Endothelial cell of umbilical vein (primary cell): ENCODE measurements at regions of chr9 and their contacts with region 1.

Region 1: GRCh38 chr9:14768405-14769229 is 46.1 kb upstream of the CER1 start:
- DNase-seq: peak; percentile 77
- H3K4me3 ChIP-seq: no peak overlapping the region
- H3K27ac ChIP-seq: no peak overlapping the region
- H3K4me1 ChIP-seq: peaks cover 3% of the 10 kb centered on the region
- H3K27me3 ChIP-seq: no peaks in the 10 kb centered on the region
- CTCF ChIP-seq: peak; percentile 44 to 47
- POLR2A ChIP-seq: no peak

Region 2: DNA sequence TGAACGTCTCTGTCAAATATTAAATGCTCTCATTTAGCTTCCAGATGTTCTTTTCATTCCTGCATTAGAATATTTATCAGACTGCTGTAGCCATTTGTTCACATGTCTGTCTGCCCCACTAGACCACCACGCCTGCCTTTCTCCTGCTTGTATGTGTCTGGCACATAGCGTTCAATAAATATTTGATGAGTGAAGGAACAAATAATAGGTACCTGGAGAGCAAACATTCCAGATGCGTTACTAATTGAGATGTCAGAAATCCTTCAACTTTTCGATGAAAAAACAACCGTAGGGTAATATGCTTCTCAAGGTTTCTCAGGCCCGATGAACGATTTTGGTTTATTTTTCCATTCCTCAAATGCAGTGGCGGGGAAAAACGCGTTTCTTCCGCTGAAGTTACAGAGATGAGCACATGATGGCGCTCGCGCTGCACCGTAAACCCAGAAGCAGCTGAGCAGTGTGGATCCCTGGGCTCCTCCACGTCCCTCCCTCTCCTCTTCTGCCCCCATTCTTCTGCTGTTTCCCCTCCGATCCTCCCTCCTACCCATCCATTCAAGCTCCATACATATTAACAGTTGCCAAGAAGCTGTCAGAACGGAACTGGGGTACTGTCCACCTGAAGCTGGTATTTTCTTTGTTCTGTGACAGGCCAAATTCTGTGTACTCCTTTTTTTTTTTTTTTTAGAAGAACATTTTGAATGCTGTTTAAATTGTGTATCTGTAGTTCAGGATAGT is 1734.5 kb before region 1 on chr9:
- CTCF ChIA-PET with region 1: interaction called, 26 read pairs
- POLR2A ChIA-PET with region 1: no interaction called
- dilution Hi-C with region 1: no loop called
- intact Hi-C with region 1: loop called (anchors 1 kb)
- DNase-seq: peak; percentile 75
- H3K4me3 ChIP-seq: no peak overlapping the region
- H3K27ac ChIP-seq: no peak overlapping the region
- H3K4me1 ChIP-seq: no peaks in the 10 kb centered on the region
- H3K27me3 ChIP-seq: no peaks in the 10 kb centered on the region
- CTCF ChIP-seq: peak; percentile 77 to 81
- POLR2A ChIP-seq: no peak

Region 3: GRCh38 chr9:14466429-14466818 is 302.2 kb before region 1 on chr9:
- CTCF ChIA-PET with region 1: interaction called, 130 read pairs
- POLR2A ChIA-PET with region 1: no interaction called
- dilution Hi-C with region 1: no loop called
- intact Hi-C with region 1: loop called (anchors 1 kb)
- DNase-seq: no peak
- H3K4me3 ChIP-seq: no peak overlapping the region
- H3K27ac ChIP-seq: no peak overlapping the region
- H3K4me1 ChIP-seq: peaks cover 10% of the 10 kb centered on the region
- H3K27me3 ChIP-seq: no peaks in the 10 kb centered on the region
- CTCF ChIP-seq: no peak
- POLR2A ChIP-seq: no peak

Region 4: DNA sequence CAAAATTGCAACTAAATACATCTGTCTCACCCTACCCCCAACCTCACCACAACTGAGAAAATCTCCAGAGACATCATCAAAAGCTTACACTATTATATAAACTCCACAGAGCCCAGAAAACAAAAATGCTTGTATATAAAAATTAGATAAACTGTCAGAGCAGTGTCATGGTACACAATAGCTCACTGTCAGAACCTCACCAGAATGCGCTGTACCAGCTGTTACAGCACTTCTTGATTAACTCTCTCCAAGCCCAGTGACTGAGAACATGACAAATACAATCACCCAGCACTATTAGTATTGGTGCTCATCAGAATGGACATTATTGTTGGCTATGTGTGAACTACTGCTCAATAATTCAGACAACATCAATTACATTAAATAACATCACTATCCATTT is 141.1 kb before region 1 on chr9:
- CTCF ChIA-PET with region 1: interaction called, 10 read pairs
- POLR2A ChIA-PET with region 1: no interaction called
- dilution Hi-C with region 1: no loop called
- intact Hi-C with region 1: no loop called
- DNase-seq: no peak
- H3K4me3 ChIP-seq: no peak overlapping the region
- H3K27ac ChIP-seq: no peak overlapping the region
- H3K4me1 ChIP-seq: peaks cover 4% of the 10 kb centered on the region
- H3K27me3 ChIP-seq: no peaks in the 10 kb centered on the region
- CTCF ChIP-seq: no peak
- POLR2A ChIP-seq: no peak

Region 5: GRCh38 chr9:14687042-14687719 is 81.4 kb before region 1 on chr9:
- CTCF ChIA-PET with region 1: interaction called, 12 read pairs
- POLR2A ChIA-PET with region 1: no interaction called
- dilution Hi-C with region 1: no loop called
- intact Hi-C with region 1: loop called (anchors 1 kb)
- DNase-seq: peak; percentile 73
- H3K4me3 ChIP-seq: no peak overlapping the region
- H3K27ac ChIP-seq: peak overlapping the region; percentile 16
- H3K4me1 ChIP-seq: peaks cover 38% of the 10 kb centered on the region
- H3K27me3 ChIP-seq: no peaks in the 10 kb centered on the region
- CTCF ChIP-seq: no peak
- POLR2A ChIP-seq: no peak

Region 6: GRCh38 chr9:14813336-14814180 is 44.9 kb after region 1 on chr9:
- CTCF ChIA-PET with region 1: no interaction called
- POLR2A ChIA-PET with region 1: no interaction called
- dilution Hi-C with region 1: no loop called
- intact Hi-C with region 1: no loop called
- DNase-seq: no peak
- H3K4me3 ChIP-seq: no peak overlapping the region
- H3K27ac ChIP-seq: no peak overlapping the region
- H3K4me1 ChIP-seq: no peaks in the 10 kb centered on the region
- H3K27me3 ChIP-seq: peaks cover 8 to 11% of the 10 kb centered on the region in 2 experiments
- CTCF ChIP-seq: no peak
- POLR2A ChIP-seq: no peak

Region 7: GRCh38 chr9:15135164-15135792 is 366.7 kb after region 1 on chr9:
- CTCF ChIA-PET with region 1: interaction called, 4 read pairs
- POLR2A ChIA-PET with region 1: no interaction called
- dilution Hi-C with region 1: no loop called
- intact Hi-C with region 1: loop called (anchors 5 kb)
- DNase-seq: peak; percentile 82
- H3K4me3 ChIP-seq: no peak overlapping the region
- H3K27ac ChIP-seq: no peak overlapping the region
- H3K4me1 ChIP-seq: no peaks in the 10 kb centered on the region
- H3K27me3 ChIP-seq: no peaks in the 10 kb centered on the region
- CTCF ChIP-seq: peak; percentile 79 to 91
- POLR2A ChIP-seq: no peak